PC-9 (cell line): ENCODE measurements at regions of chr17 and their contacts with region 1.

Region 1: DNA sequence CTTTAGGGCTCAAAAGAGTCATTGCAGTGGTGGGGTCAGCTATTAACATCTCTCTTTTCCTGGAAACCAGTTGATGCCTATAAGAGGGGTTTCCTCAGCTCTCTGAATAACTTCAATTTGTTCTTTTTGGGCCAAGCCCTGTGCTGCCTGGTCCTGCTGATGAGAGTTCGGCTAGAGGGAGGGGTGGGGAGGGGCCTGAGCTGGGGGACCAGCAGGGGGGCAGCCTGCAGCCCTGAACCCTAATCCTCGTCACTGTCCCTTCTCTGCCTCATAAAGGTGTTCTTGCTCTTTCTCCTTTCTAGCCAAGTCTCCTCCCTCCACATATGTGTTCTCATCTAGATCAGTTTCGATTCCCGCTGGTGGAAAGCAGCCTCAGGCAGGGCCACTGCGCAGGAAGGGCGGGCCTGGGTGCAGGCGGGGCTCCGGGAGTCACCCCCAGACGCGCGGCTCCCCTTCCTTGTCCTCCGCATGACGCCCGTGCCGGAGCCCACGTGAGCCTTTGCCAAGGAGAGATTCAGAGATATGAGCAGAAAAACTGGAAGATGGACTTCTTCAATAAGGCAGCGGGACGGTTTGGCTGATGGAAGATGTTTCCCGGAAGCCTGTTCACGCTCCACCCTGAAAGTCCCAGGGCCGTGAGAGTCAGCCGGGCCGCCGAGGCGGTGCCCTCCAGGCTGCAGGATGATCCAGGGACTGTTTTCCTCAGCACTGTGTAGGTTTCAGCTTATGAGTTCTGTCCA is 15.0 kb upstream of the RHOT1 start:
- DNase-seq: peak; percentile 60 to 81
- H3K4me3 ChIP-seq: peak overlapping the region; percentile 67
- H3K27ac ChIP-seq: peak overlapping the region; percentile 16; the same call in 1 of the 2 replicates
- H3K4me1 ChIP-seq: peaks cover 10% of the 10 kb centered on the region; the same call in 1 of the 2 replicates
- H3K27me3 ChIP-seq: no peaks in the 10 kb centered on the region
- CTCF ChIP-seq: no peak

Region 2: DNA sequence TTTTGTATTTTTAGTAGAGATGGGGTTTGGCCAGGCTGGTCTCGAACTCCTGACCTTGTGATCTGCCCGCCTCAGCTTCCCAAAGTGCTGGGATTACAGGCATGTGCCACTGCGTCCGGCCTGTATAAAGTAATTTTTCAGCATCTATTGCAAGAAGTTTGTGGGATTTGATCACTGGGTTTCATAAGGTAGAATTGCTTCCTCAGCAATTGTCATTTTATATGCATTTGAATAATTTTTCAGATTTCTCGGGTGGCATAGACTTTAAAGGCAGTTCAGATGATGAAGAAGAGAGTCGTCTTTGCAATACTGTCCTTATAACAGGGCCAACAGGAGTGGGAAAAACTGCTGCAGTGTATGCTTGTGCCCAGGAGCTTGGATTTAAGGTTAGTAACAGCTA is 1258.3 kb before region 1 on chr17:
- CTCF ChIA-PET with region 1: no interaction called
- POLR2A ChIA-PET with region 1: interaction called, 13 read pairs
- intact Hi-C with region 1: no loop called
- DNase-seq: no peak
- H3K4me3 ChIP-seq: no peak overlapping the region
- H3K27ac ChIP-seq: no peak overlapping the region
- H3K4me1 ChIP-seq: no peaks in the 10 kb centered on the region
- H3K27me3 ChIP-seq: no peaks in the 10 kb centered on the region
- CTCF ChIP-seq: no peak

Region 3: DNA sequence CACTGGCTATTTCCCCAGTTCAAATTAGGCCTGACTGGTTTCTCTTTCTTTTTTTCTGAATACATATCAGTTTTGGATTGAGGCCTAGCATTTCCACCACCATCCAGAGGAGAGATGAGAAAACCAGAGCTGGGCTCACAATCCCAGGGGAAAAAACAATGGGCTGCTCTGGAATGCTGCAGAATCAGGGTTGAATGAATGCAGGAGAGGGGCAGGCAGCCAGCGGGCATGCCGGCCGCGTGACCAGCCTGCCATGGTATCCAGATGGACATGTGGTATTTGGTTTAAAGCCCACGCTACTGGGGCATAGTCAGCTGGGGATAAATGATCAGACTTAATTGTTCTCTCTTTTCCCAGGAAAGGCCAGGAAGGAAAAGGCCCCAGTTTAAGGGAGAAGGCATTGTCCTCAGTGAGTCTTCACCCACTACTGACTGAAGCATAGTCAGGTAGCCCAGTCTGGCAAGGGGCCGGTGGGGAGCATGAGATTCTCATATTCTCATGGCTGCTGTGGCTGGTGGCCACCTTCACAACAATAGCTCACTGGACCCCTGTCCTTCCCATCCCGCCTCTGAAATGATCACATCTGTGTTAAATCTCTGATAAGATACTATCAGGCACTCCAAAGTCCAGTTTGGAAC is 23.7 kb before region 1 on chr17:
- CTCF ChIA-PET with region 1: no interaction called
- POLR2A ChIA-PET with region 1: no interaction called
- intact Hi-C with region 1: no loop called
- DNase-seq: no peak
- H3K4me3 ChIP-seq: no peak overlapping the region
- H3K27ac ChIP-seq: no peak overlapping the region
- H3K4me1 ChIP-seq: no peaks in the 10 kb centered on the region
- H3K27me3 ChIP-seq: no peaks in the 10 kb centered on the region
- CTCF ChIP-seq: no peak